ENCODE measurements at regions of chr2 and their contacts with region 1.

Region 1: DNA sequence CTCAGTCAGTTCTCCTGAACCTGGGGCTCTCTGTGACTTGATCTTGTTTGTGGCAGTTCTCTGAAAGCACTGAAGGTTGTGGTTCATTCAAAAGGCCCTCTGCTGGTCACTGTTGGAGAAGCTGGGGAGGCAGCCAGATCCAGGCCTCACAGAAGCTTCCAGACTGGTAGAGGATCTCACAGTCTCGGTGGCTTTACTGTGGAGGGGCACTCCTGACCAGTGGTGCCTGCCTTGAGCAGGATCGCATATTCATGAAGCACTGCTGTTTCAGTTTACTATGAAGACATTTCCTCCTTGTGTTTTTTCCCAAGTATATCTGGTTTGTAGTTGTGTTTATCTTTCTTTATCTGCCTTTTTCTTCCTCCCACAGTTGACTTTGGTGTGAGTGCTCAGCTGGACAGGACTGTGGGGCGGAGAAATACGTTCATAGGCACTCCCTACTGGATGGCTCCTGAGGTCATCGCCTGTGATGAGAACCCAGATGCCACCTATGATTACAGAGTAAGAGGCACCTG is 133.9 kb downstream of the MAP4K4 start:
- DNase-seq: peak; percentile 47 to 71
- ATAC-seq: peak; percentile 77 to 95
- H3K4me3 ChIP-seq: no peak overlapping the region
- H3K27ac ChIP-seq: peak overlapping the region; percentile 23 to 50 (median 34)
- H3K4me1 ChIP-seq: peaks cover 11 to 12% of the 10 kb centered on the region in 2 donors
- H3K27me3 ChIP-seq: no peaks in the 10 kb centered on the region
- CTCF ChIP-seq: peak; percentile 55 to 83 (median 73)
- POLR2A ChIP-seq: no peak

Region 2: GRCh38 chr2:101341901-101342624 is 489.3 kb before region 1 on chr2:
- in situ Hi-C with region 1: loop called in 2 of 4 experiments (anchors 10 to 25 kb)
- intact Hi-C with region 1: loop called (anchors 5 kb)
- DNase-seq: peak; percentile 37 to 38
- ATAC-seq: peak; percentile 42 to 56
- H3K4me3 ChIP-seq: no peak overlapping the region
- H3K27ac ChIP-seq: no peak overlapping the region
- H3K4me1 ChIP-seq: no peaks in the 10 kb centered on the region
- H3K27me3 ChIP-seq: no peaks in the 10 kb centered on the region
- CTCF ChIP-seq: peak; percentile 30 to 84 (median 71)
- POLR2A ChIP-seq: no peak

Region 3: DNA sequence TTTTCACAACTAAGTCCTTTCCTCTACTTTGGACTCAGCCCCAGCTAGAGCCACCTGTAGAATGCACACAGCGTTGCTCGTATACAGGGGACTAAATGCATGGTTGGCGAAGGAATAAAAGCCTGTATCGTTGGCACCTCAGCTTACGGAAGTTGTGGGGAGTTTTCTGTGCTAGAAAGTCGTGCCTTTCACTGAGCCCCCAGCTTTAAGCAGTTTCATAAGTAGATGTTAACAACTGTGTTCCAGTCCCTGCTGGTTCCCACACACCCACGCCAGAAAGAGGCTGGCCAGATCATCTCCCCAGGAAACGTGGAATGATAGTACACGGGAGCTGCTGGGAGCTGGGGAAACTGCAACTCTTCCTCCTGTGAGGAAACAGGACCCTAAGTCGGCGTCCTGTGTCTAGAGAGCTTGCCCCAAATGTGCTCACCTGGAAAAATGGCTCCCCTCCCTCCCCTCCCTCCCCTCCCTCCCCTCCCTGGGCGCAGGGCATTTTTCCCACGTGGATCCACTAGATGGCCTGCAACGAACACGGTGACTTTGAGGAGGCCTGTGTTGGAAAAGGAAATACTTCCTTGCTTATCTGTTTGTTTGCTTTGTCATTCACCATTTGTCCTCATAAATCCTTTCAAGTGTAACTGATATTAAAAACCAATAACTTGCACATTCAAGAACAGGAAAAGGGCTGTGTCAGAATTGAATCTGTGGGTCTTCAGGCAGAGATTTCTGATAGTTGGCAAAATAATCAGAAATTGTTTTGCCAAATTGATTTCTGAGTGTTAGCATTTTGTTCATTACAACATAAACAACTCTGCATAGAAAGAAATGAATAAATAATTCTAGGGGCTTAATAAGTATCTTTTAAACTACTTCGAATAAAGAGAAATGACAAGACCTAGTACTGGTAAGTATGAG is 312.6 kb before region 1 on chr2:
- in situ Hi-C with region 1: loop called (anchors 5 to 25 kb)
- intact Hi-C with region 1: loop called (anchors 1 kb)
- DNase-seq: peak; percentile 16 to 37
- ATAC-seq: peak; percentile 84 to 93
- H3K4me3 ChIP-seq: no peak overlapping the region
- H3K27ac ChIP-seq: peak overlapping the region in 1 of 4 donors; percentile 7
- H3K4me1 ChIP-seq: peaks cover 0 to 9% of the 10 kb centered on the region in 2 donors
- H3K27me3 ChIP-seq: no peaks in the 10 kb centered on the region
- CTCF ChIP-seq: peak in 4 of 5 experiments; percentile 6 to 59 (median 44)
- POLR2A ChIP-seq: no peak

Region 4: GRCh38 chr2:101770726-101771125 is 60.7 kb before region 1 on chr2:
- in situ Hi-C with region 1: no loop called
- intact Hi-C with region 1: loop called (anchors 5 kb)
- DNase-seq: no peak
- ATAC-seq: peak in 1 of 2 donors; percentile 60
- H3K4me3 ChIP-seq: no peak overlapping the region
- H3K27ac ChIP-seq: no peak overlapping the region
- H3K4me1 ChIP-seq: peaks cover 46 to 61% of the 10 kb centered on the region in 2 donors
- H3K27me3 ChIP-seq: no peaks in the 10 kb centered on the region
- CTCF ChIP-seq: peak in 3 of 5 experiments; percentile 23 to 39 (median 34)
- POLR2A ChIP-seq: no peak